HAP-1 (cell line): ENCODE measurements at regions of chr5 and their contacts with region 1.

Region 1: GRCh38 chr5:170225326-170226128 is 7.3 kb upstream of the C5orf58 start:
- DNase-seq: peak; percentile 33 to 80
- H3K4me3 ChIP-seq: no peak overlapping the region
- H3K4me1 ChIP-seq: peaks cover 6% of the 10 kb centered on the region
- H3K27me3 ChIP-seq: no peaks in the 10 kb centered on the region

Region 2: DNA sequence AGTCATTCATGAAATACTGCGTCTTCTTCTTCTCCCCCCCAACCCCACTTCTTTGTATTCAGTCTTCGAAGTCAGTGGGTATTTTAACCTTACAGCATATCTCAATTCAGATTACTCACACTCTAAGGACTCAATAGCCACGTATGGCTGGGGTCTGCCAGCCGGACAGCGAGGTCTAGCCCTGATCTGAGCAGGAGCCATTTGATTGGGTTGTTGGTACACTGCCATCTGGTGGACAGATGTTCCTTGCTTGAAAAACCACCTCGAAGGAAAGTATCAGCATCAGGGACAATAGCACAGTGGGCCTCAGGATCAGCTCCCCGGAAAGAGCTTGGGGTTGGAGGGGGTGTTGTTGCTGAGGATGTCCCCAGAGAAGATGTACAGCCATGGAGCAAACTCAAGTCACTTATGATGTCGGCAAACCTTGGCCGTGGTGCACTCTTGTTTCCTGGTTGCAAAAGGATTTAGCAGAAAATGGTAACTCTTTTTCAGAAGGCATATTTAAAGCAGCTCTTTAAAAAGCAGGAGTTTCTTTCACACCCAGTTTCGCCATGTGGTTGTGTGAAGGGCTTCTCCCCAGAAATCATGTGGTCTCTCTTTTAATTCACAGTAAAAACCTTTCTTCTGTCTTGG is 195.4 kb after region 1 on chr5:
- in situ Hi-C with region 1: loop called (anchors 5 kb)
- DNase-seq: peak; percentile 57 to 80
- H3K4me3 ChIP-seq: no peak overlapping the region
- H3K4me1 ChIP-seq: no peaks in the 10 kb centered on the region
- H3K27me3 ChIP-seq: peaks cover 17% of the 10 kb centered on the region

Region 3: GRCh38 chr5:170623576-170624181 is 398.2 kb after region 1 on chr5:
- in situ Hi-C with region 1: loop called (anchors 10 kb)
- DNase-seq: peak; percentile 49 to 84
- H3K4me3 ChIP-seq: no peak overlapping the region
- H3K4me1 ChIP-seq: no peaks in the 10 kb centered on the region
- H3K27me3 ChIP-seq: no peaks in the 10 kb centered on the region; the same call in 1 of the 2 replicates

Region 4: DNA sequence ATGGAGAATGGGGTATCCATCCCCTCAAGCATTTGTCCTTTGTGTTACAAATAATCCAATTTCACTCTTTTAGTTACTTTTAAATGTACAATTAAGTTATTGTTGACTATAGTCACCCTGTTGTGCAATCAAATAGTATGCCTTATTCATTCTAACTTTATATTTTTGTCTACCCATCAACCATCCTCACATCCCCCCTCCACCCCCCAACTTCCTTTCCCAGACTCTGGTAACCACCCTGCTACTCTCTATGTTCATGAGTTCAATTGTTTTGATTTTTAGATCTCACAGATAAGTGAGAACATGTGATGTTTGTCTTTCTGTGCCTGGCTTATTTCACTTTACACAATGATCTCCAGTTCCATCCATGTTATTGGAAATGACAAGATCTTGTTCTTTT is 620.9 kb after region 1 on chr5:
- in situ Hi-C with region 1: no loop called
- DNase-seq: no peak
- H3K4me3 ChIP-seq: no peak overlapping the region
- H3K4me1 ChIP-seq: no peaks in the 10 kb centered on the region
- H3K27me3 ChIP-seq: no peaks in the 10 kb centered on the region